ENCODE measurements at regions of chr4 and their contacts with region 1.

Region 1: DNA sequence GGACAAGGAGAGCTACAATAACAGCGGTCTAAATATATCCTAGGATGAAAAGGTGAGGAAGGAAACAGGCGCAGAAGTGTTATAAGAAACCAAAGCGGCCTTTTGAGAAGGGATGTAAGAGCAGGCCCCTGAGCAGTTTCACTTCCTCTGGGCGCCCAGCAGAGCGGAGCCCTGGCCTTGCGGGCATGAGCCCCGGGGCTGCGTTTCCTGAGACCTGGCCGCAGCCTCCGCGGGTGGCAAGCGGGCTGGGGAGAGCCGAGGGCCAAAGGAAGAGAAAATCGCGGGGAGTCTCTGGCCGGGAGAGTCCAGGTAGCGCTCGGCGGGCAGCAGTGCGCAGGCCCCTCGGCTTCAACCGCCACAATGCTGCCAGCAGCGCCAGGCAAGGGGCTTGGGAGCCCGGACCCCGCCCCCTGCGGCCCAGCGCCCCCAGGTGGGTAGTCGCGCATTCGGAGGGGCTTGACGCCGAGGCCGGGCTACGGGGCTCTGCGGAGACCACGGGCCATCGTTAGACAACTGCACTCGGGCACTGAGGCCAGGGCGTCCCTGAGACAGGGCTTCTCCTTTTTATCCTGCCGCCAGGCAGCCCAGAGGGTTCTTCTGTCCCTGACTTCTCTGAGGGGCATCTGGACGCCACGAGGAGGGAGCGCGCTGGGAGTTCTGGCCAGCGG is at the start of gene BANK1:
- DNase-seq: peak; percentile 47
- ATAC-seq: peak; percentile 72
- H3K4me3 ChIP-seq: peak within 1 kb of the TSS; percentile 74
- H3K27ac ChIP-seq: peak within 1 kb of the TSS; percentile 56
- H3K4me1 ChIP-seq: peaks cover 16% of the 10 kb centered on the region
- H3K27me3 ChIP-seq: no peaks in the 10 kb centered on the region
- CTCF ChIP-seq: peak; percentile 45; the same call in 1 of the 2 replicates
- total RNA-seq, gene BANK1: 1.5 and 1.8 TPM in 2 replicates

Region 2: DNA sequence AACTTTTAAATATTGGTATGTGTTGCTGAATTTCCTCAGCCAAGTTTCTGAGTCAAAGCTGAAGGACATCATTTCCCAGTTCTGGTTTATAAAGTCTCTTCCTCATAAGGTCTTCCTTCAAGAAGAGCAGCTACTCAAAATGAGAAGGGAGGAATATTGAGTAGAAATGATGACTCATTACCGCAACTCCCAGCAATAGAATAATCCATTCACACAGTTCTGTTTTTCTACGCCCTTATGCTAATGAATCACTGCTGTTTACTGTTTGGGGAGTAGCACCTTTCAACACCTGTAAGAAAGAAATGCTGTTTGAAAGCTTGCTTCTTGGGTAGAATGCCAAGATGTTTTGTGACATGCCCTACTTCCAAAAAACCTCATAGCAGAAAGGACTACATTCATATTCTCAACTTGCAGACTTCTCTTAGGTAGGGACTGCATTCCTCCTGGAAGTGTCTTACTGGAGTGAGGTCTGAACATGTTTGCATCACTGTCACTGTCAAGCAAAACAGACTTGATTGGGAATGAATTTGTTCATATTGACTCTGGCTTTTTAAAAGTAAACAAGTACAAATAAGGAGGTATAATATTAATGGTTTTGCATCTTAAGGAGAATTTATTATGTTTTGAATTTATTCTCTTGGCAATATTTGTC is 147.3 kb before region 1 on chr4:
- CTCF ChIA-PET with region 1: no interaction called
- POLR2A ChIA-PET with region 1: no interaction called
- intact Hi-C with region 1: no loop called
- DNase-seq: peak; percentile 26
- ATAC-seq: no peak
- H3K4me3 ChIP-seq: no peak overlapping the region
- H3K27ac ChIP-seq: no peak overlapping the region
- H3K4me1 ChIP-seq: no peaks in the 10 kb centered on the region
- H3K27me3 ChIP-seq: no peaks in the 10 kb centered on the region
- CTCF ChIP-seq: no peak

Region 3: DNA sequence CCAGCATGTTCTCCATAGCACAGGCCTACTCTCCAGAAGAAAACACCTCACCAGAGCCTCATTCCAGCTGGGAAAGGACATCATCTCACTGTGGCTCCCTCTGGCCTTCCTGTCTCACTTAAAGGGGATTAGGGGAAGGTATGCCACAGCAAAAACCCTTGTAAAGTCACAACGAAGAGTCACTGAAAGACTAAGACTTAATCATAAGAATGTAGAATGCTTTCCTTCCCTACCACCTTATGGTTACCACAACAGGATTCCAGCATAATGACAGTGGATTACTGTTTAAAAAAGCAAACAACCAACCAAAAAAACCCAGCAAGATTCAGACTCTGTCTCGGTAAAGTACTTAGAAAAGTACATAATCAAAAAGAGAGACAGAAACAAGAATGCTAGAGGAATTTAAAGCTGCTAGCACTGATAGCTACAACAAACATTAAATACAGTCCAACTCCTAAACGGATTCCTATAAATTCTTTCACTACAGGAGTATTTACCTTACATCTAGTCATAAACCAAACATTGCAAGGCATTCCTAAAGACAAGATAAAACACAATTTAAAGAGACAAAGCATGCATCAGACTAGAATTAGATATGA is 74.9 kb after region 1 on chr4:
- CTCF ChIA-PET with region 1: interaction called, 4 read pairs
- POLR2A ChIA-PET with region 1: no interaction called
- intact Hi-C with region 1: loop called (anchors 2 kb)
- DNase-seq: peak; percentile 83
- ATAC-seq: peak; percentile 89
- H3K4me3 ChIP-seq: peak overlapping the region; percentile 1; the same call in 1 of the 2 replicates
- H3K27ac ChIP-seq: peak overlapping the region; percentile 91
- H3K4me1 ChIP-seq: peaks cover 24% of the 10 kb centered on the region
- H3K27me3 ChIP-seq: no peaks in the 10 kb centered on the region
- CTCF ChIP-seq: no peak

Region 4: GRCh38 chr4:101977076-101977475 is 186.4 kb after region 1 on chr4:
- CTCF ChIA-PET with region 1: no interaction called
- POLR2A ChIA-PET with region 1: no interaction called
- intact Hi-C with region 1: loop called (anchors 5 kb)
- DNase-seq: peak; percentile 93
- ATAC-seq: peak; percentile 90
- H3K4me3 ChIP-seq: no peak overlapping the region
- H3K27ac ChIP-seq: peak overlapping the region; percentile 72
- H3K4me1 ChIP-seq: peaks cover 73% of the 10 kb centered on the region
- H3K27me3 ChIP-seq: no peaks in the 10 kb centered on the region
- CTCF ChIP-seq: no peak

Measured in PC-3 (cell line).